H1 (cell line): ENCODE measurements at regions of chr2 and their contacts with region 1.

Region 1: DNA sequence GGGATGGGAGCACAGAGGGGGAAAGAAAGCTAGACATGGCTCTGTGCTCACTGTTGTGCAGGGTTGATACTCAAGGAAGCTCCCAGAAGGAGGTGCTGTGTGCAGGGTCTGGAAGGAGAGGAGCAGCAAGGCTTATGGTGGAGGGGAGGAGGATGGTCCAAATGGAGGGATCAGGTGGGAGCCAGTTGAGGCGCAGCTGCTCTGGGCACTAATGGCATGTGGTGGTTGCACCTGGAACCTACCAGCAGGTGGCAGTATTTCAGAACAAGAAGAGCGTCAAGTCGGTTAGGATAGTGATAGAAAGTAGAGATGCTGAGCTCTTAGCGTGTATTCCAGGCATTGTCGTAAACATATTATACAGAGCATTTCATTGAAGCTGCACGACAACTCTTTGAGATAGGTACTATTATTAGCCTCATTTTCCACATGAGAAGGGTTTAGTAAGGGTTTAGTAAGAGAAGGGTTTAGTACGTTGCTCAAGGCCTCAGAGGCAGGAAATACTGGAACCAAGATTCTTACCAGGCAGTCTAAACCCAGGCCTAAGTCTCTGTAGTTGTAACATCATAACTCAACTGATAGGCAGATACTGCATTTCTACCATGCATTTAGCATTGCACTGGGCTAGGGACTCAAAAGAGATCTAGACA is 223.7 kb downstream of the CYP26B1 start:
- DNase-seq: peak; percentile 72 to 80
- H3K4me3 ChIP-seq: no peak overlapping the region
- H3K27ac ChIP-seq: no peak overlapping the region
- H3K4me1 ChIP-seq: no peaks in the 10 kb centered on the region
- H3K27me3 ChIP-seq: no peaks in the 10 kb centered on the region
- CTCF ChIP-seq: peak; percentile 76 to 97 (median 88)
- EP300 ChIP-seq: no peak
- POLR2A ChIP-seq: no peak
- RAD21 ChIP-seq: peak; percentile 85 to 88

Region 2: DNA sequence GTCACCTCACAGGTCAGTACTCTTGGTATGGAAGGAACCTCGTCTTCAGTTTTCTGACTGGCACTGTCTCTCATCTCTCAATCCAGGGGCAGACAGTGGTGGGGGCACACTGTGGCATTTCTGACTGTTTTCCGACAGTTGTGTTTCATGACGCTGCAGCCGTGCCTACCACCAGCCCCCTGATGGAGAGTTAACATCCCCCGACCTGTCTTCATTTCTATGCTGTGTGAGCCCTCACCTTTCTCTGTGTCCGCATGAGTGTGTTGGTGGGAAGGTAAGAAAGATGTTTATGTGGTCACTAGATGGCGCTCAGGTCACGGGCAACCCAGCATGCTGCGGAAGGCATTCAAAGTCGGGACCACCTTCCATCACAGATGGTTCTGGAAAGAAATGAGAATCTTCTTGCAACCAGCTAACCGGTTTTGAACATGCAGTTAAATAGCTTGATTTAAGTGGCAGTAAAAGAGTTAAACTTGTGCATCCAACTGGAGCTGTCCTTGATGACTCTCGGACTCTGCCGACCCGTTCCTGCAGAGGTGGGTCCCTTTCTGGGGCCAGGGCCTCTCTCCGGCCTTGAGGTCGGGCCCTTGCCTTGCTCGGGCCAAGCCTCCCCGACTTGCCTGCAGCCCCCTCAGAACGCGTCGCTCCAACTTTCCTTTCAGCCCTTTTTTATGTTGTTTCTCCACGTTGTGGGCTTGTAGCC is 378.3 kb before region 1 on chr2:
- CTCF ChIA-PET with region 1: interaction called, 27 read pairs
- POLR2A ChIA-PET with region 1: no interaction called
- DNase-seq: peak; percentile 56 to 68
- H3K4me3 ChIP-seq: no peak overlapping the region
- H3K27ac ChIP-seq: no peak overlapping the region
- H3K4me1 ChIP-seq: no peaks in the 10 kb centered on the region
- H3K27me3 ChIP-seq: no peaks in the 10 kb centered on the region
- CTCF ChIP-seq: peak; percentile 78 to 91 (median 89)
- EP300 ChIP-seq: no peak
- POLR2A ChIP-seq: no peak
- RAD21 ChIP-seq: peak; percentile 96 to 97

Region 3: GRCh38 chr2:71943238-71944182 is 19.5 kb after region 1 on chr2:
- CTCF ChIA-PET with region 1: interaction called, 90 read pairs
- POLR2A ChIA-PET with region 1: no interaction called
- DNase-seq: peak in 1 of 2 experiments; percentile 43
- H3K4me3 ChIP-seq: no peak overlapping the region
- H3K27ac ChIP-seq: no peak overlapping the region
- H3K4me1 ChIP-seq: no peaks in the 10 kb centered on the region
- H3K27me3 ChIP-seq: no peaks in the 10 kb centered on the region
- CTCF ChIP-seq: no peak
- EP300 ChIP-seq: no peak
- POLR2A ChIP-seq: no peak
- RAD21 ChIP-seq: no peak

Region 4: GRCh38 chr2:71989671-71990070 is 65.7 kb after region 1 on chr2:
- CTCF ChIA-PET with region 1: interaction called, 54 read pairs
- POLR2A ChIA-PET with region 1: no interaction called
- DNase-seq: no peak
- H3K4me3 ChIP-seq: no peak overlapping the region
- H3K27ac ChIP-seq: no peak overlapping the region
- H3K4me1 ChIP-seq: no peaks in the 10 kb centered on the region
- H3K27me3 ChIP-seq: no peaks in the 10 kb centered on the region
- CTCF ChIP-seq: no peak
- EP300 ChIP-seq: no peak
- POLR2A ChIP-seq: no peak
- RAD21 ChIP-seq: no peak

Region 5: GRCh38 chr2:72104821-72105588 is 181.0 kb after region 1 on chr2:
- CTCF ChIA-PET with region 1: interaction called, 40 read pairs
- POLR2A ChIA-PET with region 1: no interaction called
- DNase-seq: peak in 1 of 2 experiments; percentile 50
- H3K4me3 ChIP-seq: no peak overlapping the region
- H3K27ac ChIP-seq: no peak overlapping the region
- H3K4me1 ChIP-seq: no peaks in the 10 kb centered on the region; a peak in 3 of 7 replicates
- H3K27me3 ChIP-seq: no peaks in the 10 kb centered on the region
- CTCF ChIP-seq: peak; percentile 48 to 63 (median 51)
- EP300 ChIP-seq: no peak
- POLR2A ChIP-seq: no peak
- RAD21 ChIP-seq: peak; percentile 68 to 76

Region 6: DNA sequence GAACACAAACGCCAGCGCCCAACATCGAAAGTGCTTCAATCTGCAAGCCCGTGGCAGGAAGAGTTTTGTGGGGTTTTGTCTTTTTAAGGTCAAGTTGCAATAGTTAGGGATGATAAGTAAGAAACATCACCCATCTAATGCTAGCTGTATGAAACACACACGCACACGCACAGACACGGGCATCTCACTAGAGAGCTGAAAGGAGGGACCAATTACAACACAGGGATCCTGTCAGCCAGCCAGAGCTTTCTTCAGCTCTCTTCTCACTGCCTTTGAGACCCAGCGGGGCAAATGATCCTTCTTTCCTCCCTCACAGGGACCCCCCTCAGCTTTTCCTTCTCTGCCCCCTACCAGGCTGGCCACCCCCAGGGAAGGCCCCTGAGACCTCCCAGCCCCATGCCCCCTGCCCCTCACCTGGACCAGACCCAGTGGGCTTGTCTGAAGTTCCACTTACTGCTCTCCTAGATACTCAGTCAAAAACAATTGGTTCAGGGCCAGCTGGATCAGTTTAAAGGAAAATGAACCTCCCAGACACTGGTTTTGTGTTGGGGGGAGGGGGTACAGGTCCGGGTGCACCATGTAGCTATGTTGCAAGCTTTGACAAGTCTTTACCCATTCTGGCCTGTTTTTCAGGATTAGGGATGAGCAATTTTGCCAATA is 205.8 kb after region 1 on chr2:
- CTCF ChIA-PET with region 1: interaction called, 11 read pairs
- POLR2A ChIA-PET with region 1: no interaction called
- DNase-seq: peak in 1 of 2 experiments; percentile 38
- H3K4me3 ChIP-seq: no peak overlapping the region
- H3K27ac ChIP-seq: no peak overlapping the region
- H3K4me1 ChIP-seq: peaks cover 0 to 9% (median 6%) of the 10 kb centered on the region in 4 experiments; a peak in 5 of 7 replicates
- H3K27me3 ChIP-seq: peaks cover 0 to 4% (median 0%) of the 10 kb centered on the region in 4 experiments; a peak in 1 of 7 replicates
- CTCF ChIP-seq: no peak
- EP300 ChIP-seq: no peak
- POLR2A ChIP-seq: no peak
- RAD21 ChIP-seq: no peak

Region 7: GRCh38 chr2:72150157-72150865 is 226.3 kb after region 1 on chr2:
- CTCF ChIA-PET with region 1: interaction called, 115 read pairs
- POLR2A ChIA-PET with region 1: no interaction called
- DNase-seq: peak in 1 of 2 experiments; percentile 95
- H3K4me3 ChIP-seq: peak overlapping the region; percentile 49 to 56 (median 52); a peak in 7 of 8 replicates
- H3K27ac ChIP-seq: no peak overlapping the region
- H3K4me1 ChIP-seq: peaks cover 7 to 28% (median 16%) of the 10 kb centered on the region in 4 experiments
- H3K27me3 ChIP-seq: peaks cover 36 to 62% (median 58%) of the 10 kb centered on the region in 4 experiments
- CTCF ChIP-seq: peak in 2 of 3 experiments; percentile 79 to 89; a peak in 3 of 4 replicates
- EP300 ChIP-seq: no peak
- POLR2A ChIP-seq: no peak
- RAD21 ChIP-seq: peak; percentile 92 to 93